Activated B cell treated with CpG ODN at 0.5 μM for 24 hours (primary cell): ENCODE measurements at regions of chr22 and their contacts with region 1.

Region 1: DNA sequence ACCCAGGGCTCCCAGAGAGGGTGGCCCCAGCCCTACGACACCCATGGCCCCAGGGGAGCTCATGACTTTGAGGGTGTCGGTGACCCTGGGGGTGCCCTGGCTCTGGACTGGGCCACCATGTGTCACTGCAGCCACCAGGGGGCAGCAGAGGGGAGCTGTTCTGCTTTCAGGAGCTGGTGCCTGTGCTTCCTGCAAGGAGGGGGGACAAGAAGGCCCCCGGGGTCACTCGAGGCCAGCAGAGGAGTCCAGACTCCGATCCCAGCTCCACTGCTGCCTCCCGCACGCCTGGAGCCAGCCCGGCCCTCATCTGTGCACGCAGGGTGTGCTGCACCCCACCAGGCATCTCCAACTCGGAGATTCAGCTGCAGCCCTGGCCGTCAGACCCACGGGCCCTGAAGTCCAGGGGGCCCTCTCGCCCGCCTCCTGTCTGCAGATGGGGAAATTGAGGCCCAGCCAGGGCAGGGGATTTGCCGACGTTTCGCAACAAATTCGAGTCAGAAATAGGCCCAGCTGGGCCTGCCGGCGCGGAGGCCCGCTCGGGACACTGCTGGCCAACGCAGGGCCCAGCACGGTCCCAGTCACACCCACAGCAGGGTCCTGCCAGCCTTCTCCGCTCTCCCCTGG is 29.5 kb upstream of the WNT7B start:
- DNase-seq: peak; percentile 85
- ATAC-seq: peak; percentile 84
- H3K4me3 Mint-ChIP-seq: no peak overlapping the region
- H3K27ac Mint-ChIP-seq: no peak overlapping the region
- H3K4me1 Mint-ChIP-seq: peaks cover 12% of the 10 kb centered on the region
- H3K27me3 Mint-ChIP-seq: no peaks in the 10 kb centered on the region
- CTCF ChIP-seq: peak; percentile 80

Region 2: DNA sequence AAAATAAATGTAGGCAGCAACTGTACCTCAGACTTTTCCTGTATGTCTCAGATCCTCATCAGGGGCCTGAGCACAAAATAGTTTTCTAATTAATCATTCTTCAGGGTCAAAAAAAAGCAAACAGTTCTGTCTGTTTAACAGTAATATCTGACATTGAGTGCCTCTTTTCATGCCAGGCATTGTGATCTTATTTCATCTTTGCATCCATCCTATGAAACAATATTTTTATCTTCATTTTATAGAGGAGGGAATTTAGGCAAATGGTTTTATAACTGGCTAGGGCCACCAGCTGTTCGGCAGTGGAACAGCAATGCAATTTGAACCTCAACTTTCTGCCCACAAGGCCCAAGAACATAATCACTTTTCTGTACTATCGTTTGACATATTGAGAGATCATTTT is 175.1 kb before region 1 on chr22:
- CTCF ChIA-PET with region 1: no interaction called
- POLR2A ChIA-PET with region 1: no interaction called
- intact Hi-C with region 1: no loop called
- DNase-seq: no peak
- ATAC-seq: no peak
- H3K4me3 Mint-ChIP-seq: no peak overlapping the region
- H3K27ac Mint-ChIP-seq: no peak overlapping the region
- H3K4me1 Mint-ChIP-seq: peaks cover 13% of the 10 kb centered on the region
- H3K27me3 Mint-ChIP-seq: no peaks in the 10 kb centered on the region
- CTCF ChIP-seq: no peak

Region 3: GRCh38 chr22:45977003-45977411 is 29.5 kb before region 1 on chr22 and contains the start of gene WNT7B:
- CTCF ChIA-PET with region 1: no interaction called
- POLR2A ChIA-PET with region 1: no interaction called
- intact Hi-C with region 1: no loop called
- DNase-seq: no peak
- ATAC-seq: no peak
- H3K4me3 Mint-ChIP-seq: peak within 1 kb of the TSS; percentile 60
- H3K27ac Mint-ChIP-seq: no peak within 1 kb of the TSS
- H3K4me1 Mint-ChIP-seq: peaks cover 25% of the 10 kb centered on the region
- H3K27me3 Mint-ChIP-seq: peaks cover 31% of the 10 kb centered on the region
- CTCF ChIP-seq: no peak
- total RNA-seq, gene WNT7B: not detected in 2 replicates

Region 4: DNA sequence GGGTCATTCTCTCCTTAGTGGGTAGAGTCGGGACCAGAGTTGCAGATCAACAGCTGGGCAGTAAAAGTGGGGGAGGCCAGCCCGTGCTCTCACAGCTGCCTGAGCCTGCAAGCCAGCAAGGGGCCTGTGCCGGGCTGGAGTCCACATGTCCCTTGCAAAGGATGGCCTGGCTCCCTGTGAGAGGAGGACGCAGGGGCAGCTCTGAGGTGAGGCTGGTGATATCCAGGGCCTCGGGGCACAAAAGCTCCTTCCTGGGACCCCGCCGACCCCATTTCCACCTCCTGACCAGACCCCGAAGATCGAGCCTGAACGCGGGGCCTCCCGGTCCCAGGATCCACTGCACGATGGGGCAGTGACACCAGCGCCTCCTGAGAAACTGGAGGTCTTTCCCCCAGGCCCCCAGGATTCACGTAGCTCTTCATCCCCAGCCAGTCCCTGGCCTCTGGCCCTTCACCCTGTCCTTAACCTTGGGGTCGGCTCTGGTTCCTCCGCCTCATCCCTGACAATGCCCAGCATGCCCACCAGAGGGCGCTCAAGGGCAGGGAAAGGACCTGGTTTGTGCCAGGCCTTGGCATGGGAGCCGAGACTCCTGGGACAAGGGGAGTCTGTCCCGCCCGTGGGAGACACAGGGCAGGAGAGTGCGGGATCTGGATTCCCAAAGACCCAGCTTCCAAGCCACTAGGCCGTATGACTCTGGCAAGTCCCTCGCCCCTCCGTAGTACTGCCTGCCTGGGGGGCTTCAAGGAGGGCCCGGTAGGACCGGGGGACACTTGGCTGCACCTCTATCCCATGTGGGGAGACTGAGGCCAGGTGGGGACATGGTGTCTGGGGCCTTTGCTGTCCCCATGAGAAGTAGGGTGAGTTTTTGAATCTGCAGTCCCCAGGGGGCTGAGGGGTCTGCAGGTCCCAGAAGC is 11.7 kb before region 1 on chr22:
- CTCF ChIA-PET with region 1: interaction called, 67 read pairs
- POLR2A ChIA-PET with region 1: interaction called, 11 read pairs
- intact Hi-C with region 1: loop called (anchors 1 kb)
- DNase-seq: peak; percentile 79
- ATAC-seq: peak; percentile 51
- H3K4me3 Mint-ChIP-seq: no peak overlapping the region
- H3K27ac Mint-ChIP-seq: no peak overlapping the region
- H3K4me1 Mint-ChIP-seq: peaks cover 26% of the 10 kb centered on the region
- H3K27me3 Mint-ChIP-seq: peaks cover 2% of the 10 kb centered on the region
- CTCF ChIP-seq: peak; percentile 24

Region 5: GRCh38 chr22:46081831-46082210 is 75.3 kb after region 1 on chr22:
- CTCF ChIA-PET with region 1: interaction called, 4 read pairs
- POLR2A ChIA-PET with region 1: interaction called, 10 read pairs
- intact Hi-C with region 1: no loop called
- DNase-seq: no peak
- ATAC-seq: no peak
- H3K4me3 Mint-ChIP-seq: no peak overlapping the region
- H3K27ac Mint-ChIP-seq: no peak overlapping the region
- H3K4me1 Mint-ChIP-seq: peaks cover 3% of the 10 kb centered on the region
- H3K27me3 Mint-ChIP-seq: no peaks in the 10 kb centered on the region
- CTCF ChIP-seq: no peak

Region 6: DNA sequence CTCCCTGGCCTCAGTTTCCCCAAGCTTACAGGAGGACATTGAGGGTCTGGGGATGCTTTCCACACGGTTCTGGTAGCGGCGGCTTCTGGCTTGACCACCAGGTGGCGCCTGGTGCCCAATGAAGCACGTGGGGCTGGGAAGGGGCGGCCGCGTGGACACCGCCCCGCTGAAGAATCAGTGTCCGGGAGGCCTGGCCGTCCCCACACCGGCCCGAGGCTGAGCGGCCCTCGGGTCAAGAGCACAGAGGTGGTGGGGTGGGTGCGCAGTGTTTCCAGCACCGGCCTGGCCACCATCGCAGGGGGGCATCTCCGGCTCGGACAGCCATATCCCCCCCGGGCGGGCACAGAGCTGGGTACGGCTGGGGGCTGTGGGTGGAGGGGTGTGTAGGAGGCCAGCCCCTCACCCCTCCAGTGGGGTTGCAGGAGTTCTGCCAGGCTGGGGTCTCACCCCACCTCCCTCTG is 116.0 kb after region 1 on chr22:
- CTCF ChIA-PET with region 1: interaction called, 153 read pairs
- POLR2A ChIA-PET with region 1: interaction called, 31 read pairs
- intact Hi-C with region 1: no loop called
- DNase-seq: peak; percentile 69
- ATAC-seq: peak; percentile 81
- H3K4me3 Mint-ChIP-seq: no peak overlapping the region
- H3K27ac Mint-ChIP-seq: no peak overlapping the region
- H3K4me1 Mint-ChIP-seq: no peaks in the 10 kb centered on the region
- H3K27me3 Mint-ChIP-seq: peaks cover 2% of the 10 kb centered on the region
- CTCF ChIP-seq: peak; percentile 95

Region 7: DNA sequence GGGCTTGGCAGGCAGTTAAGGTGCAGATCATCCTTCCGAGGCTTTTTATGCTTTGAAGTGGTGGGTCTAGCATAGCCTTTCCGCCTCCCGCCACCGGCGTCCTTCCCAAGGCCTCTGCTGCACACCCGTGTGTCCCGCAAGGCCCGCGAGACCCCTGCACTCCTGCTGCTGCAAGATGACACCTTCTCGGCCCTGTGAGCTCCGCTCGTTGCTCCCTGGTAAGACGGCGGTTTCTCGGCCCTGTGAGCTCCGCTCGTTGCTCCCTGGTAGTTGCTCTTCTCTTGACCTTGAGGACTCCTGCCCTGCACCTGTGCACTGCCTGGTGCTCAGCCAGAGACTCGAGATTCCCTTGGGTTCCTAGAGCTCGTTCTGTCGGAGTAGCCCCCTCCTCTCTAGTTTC is 311.2 kb after region 1 on chr22:
- CTCF ChIA-PET with region 1: interaction called, 16 read pairs
- POLR2A ChIA-PET with region 1: no interaction called
- intact Hi-C with region 1: loop called (anchors 5 kb)
- DNase-seq: no peak
- ATAC-seq: no peak
- H3K4me3 Mint-ChIP-seq: no peak overlapping the region
- H3K27ac Mint-ChIP-seq: no peak overlapping the region
- H3K4me1 Mint-ChIP-seq: no peaks in the 10 kb centered on the region
- H3K27me3 Mint-ChIP-seq: no peaks in the 10 kb centered on the region
- CTCF ChIP-seq: no peak

Region 8: GRCh38 chr22:46355371-46355995 is 349.0 kb after region 1 on chr22:
- CTCF ChIA-PET with region 1: no interaction called
- POLR2A ChIA-PET with region 1: no interaction called
- intact Hi-C with region 1: no loop called
- DNase-seq: peak; percentile 61
- ATAC-seq: peak; percentile 45
- H3K4me3 Mint-ChIP-seq: no peak overlapping the region
- H3K27ac Mint-ChIP-seq: no peak overlapping the region
- H3K4me1 Mint-ChIP-seq: peaks cover 11% of the 10 kb centered on the region
- H3K27me3 Mint-ChIP-seq: no peaks in the 10 kb centered on the region
- CTCF ChIP-seq: peak; percentile 29